RWPE1 (cell line): ENCODE measurements at regions of chr19 and their contacts with region 1.

Region 1: GRCh38 chr19:55638864-55639359 is 1.9 kb upstream of the ZNF580 start:
- DNase-seq: no peak
- H3K27ac ChIP-seq: peak overlapping the region; percentile 96
- CTCF ChIP-seq: peak; percentile 63

Region 2: DNA sequence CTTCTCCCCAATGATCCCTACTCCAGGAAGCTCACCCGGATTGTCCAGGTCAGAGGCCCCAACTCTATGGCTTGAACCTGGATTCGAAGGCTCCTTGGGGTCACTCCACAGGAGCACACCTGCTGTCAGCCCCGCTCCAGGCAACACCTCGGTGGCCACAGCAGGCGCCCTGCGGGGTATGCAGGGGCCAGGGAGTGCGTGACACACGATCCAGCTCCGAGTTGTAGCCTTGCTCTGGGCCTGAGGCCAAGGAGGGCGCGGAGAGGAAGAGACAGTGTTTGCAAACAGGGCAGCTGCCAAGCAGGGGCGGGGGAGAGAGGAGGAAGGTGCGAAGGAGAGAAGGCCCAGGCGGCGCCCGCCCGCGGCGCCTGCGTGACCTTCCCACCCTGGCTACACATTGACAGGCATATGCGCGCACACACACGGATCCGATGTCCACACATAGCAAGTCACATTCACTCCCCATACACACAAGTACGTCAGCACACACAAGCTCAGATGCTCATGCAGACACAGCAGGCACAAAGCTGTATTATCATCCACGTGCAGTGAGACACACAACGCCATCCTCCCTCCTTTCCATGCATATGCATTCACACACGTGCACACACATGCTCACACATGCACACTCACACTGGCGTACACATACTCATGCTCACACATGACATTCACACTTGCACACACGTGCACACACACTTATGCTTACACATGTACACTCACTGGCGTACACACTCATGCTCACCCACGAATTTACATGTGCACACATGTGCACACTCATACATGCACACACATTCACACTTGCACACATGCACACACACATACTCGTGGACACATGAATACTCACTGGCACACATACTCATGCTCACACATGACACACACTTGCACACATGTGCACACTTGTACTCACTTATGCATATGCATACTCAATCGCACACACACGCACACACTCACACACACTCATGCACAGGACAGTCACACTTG is 112.4 kb before region 1 on chr19:
- CTCF ChIA-PET with region 1: no interaction called
- POLR2A ChIA-PET with region 1: no interaction called
- DNase-seq: no peak
- H3K27ac ChIP-seq: peak overlapping the region; percentile 34
- CTCF ChIP-seq: no peak

Region 3: DNA sequence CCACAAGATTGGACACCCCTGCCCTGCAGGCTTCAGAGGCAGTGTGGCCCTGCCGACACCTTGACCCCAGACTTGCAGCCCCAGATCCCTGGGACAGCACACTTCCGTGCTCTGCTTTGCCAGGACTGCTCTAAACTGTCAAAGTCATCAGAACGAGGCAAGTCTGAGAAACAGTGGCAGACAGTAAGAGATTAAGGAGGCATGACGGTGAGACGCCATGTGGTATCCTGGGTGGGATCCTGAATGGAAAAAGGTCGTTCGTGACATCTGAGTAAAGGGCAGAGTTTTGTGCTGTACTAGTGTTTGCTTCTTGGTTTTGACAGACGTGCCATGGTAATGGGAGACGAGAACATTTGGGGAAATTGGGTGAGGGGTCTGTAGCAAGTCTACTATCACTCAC is 72.1 kb before region 1 on chr19:
- CTCF ChIA-PET with region 1: no interaction called
- POLR2A ChIA-PET with region 1: no interaction called
- DNase-seq: no peak
- H3K27ac ChIP-seq: no peak overlapping the region
- CTCF ChIP-seq: no peak

Region 4: GRCh38 chr19:55605637-55606470 is 33.1 kb before region 1 on chr19 and contains the start of gene ZNF865:
- CTCF ChIA-PET with region 1: interaction called, 5 read pairs
- POLR2A ChIA-PET with region 1: interaction called, 10 read pairs
- DNase-seq: peak; percentile 68
- H3K27ac ChIP-seq: peak within 1 kb of the TSS; percentile 98
- CTCF ChIP-seq: peak; percentile 86